ENCODE measurements at regions of chr19 and their contacts with region 1.

Region 1: GRCh38 chr19:10112895-10113591 is 1.6 kb downstream of the P2RY11 start:
- DNase-seq: no peak
- H3K4me3 ChIP-seq: no peak overlapping the region
- H3K27ac ChIP-seq: peak overlapping the region in 1 of 2 donors; percentile 32
- H3K4me1 ChIP-seq: no peaks in the 10 kb centered on the region
- H3K27me3 ChIP-seq: no peaks in the 10 kb centered on the region
- CTCF ChIP-seq: peak in 2 of 3 donors; percentile 34 to 51
- POLR2A ChIP-seq: no peak

Region 2: DNA sequence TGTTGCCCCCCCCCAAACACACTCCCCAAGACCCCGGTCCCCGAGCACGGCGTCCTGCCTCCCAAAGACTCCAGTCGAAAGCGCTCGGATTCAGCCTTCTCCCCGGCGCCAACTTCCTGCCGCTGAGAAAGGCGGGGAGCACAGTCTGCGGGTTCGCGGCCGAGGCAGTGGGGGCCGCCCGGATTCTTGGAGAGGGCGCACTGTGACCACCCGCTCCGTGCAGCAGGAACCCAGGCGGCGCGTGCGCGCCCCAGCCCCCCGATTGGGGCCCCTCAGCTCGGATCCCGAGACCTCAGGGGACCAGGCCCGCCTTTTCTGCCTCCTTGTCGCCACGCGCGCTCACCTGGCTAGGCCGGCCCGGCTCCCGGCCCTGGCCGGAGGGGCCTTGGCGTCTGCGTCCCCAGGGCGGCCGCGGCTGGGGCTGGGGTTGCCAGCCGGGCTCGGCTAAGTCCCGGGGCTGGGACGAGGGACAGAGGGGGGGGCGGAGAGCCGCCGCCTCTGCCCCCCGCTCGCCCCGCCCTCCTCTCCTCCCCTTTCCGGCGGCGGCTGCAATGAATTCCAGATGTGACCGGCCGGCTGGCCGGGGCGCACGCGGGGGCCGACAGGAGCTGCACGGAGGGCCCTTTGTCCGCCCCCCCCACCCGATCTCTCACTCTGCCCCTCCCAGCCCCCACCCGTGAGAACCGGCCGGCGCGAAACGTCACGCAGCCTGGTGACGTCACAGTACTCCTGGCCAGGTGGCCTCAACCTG is 118.0 kb after region 1 on chr19 and contains the start of gene S1PR2:
- intact Hi-C with region 1: loop called (anchors 10 kb)
- DNase-seq: peak; percentile 66 to 73
- H3K4me3 ChIP-seq: peak within 1 kb of the TSS; percentile 91 to 98 (median 97)
- H3K27ac ChIP-seq: peak within 1 kb of the TSS; percentile 92 to 96
- H3K4me1 ChIP-seq: peaks cover 7 to 13% of the 10 kb centered on the region in 2 donors
- H3K27me3 ChIP-seq: no peaks in the 10 kb centered on the region
- CTCF ChIP-seq: no peak
- POLR2A ChIP-seq: no peak
- total RNA-seq, gene S1PR2: 6.1 to 18.4 (median 13.1) TPM

Region 3: GRCh38 chr19:10864538-10864899 is 751.5 kb after region 1 on chr19:
- intact Hi-C with region 1: no loop called
- DNase-seq: peak; percentile 64 to 88
- H3K4me3 ChIP-seq: peak overlapping the region in 1 of 3 donors; percentile 6
- H3K27ac ChIP-seq: peak overlapping the region; percentile 29 to 79
- H3K4me1 ChIP-seq: no peaks in the 10 kb centered on the region
- H3K27me3 ChIP-seq: no peaks in the 10 kb centered on the region
- CTCF ChIP-seq: peak; percentile 66 to 87 (median 87)
- POLR2A ChIP-seq: no peak